Dorsolateral prefrontal cortex (tissue), 120 donors: ENCODE measurements at regions of chr5 and their contacts with region 1.

Region 1: DNA sequence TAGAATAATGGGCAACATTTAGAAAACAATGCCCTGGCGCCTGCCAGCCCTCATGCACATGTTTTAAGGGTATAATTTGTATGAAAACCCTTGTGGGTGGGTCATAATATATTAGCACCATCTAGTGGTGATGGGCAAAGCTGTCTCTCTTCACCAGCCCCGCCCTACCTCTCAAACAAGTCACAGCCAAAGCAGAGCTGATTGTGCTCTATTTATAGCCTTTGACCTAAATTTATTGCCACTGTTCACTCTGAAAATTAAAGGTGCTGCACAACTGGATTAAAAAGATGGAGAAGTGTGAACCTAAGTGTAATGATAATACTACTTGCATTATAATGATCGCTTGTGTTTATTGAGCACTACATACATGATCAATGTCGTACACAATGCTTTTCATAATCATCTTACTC is 131.9 kb upstream of the ANKH start:
- DNase-seq: peak; percentile 35 to 80 (median 62)
- H3K4me3 ChIP-seq: no peak overlapping the region
- H3K27ac ChIP-seq: no peak overlapping the region
- H3K27me3 ChIP-seq: no peaks in the 10 kb centered on the region
- CTCF ChIP-seq: peak; percentile 65 to 98 (median 93)

Region 2: GRCh38 chr5:14399054-14399692 is 604.3 kb before region 1 on chr5:
- intact Hi-C with region 1: loop called in 1 of 2 experiments (anchors 5 kb)
- DNase-seq: peak in 1 of 10 donors; percentile 34
- H3K4me3 ChIP-seq: no peak overlapping the region
- H3K27ac ChIP-seq: peak overlapping the region in 3 of 59 donors; percentile 1 to 38 (median 9)
- H3K27me3 ChIP-seq: no peaks in the 10 kb centered on the region
- CTCF ChIP-seq: peak; percentile 51 to 85 (median 74)

Region 3: DNA sequence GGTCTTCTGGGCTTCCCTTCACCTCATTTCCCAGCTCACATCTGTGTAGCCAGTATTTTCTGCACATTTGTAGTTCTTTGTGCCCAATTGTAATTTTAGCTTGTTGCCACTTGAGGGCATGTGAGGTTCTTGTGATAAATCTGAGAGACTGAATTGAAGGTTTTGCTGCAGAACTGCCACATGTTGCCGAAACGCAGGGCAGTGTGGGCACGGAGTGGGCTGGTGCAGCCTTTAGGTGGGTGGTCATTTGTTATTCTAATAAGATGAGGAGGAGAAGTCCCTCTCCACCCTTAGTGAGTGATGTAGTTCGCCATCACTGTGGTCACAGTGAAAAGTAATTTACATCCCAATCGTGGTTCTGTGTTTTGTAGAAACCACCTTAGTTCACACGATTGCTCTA is 317.8 kb before region 1 on chr5:
- intact Hi-C with region 1: loop called (anchors 2 to 5 kb)
- DNase-seq: peak in 2 of 10 donors; percentile 42 to 50
- H3K4me3 ChIP-seq: peak overlapping the region in 13 of 59 donors; percentile 3 to 41 (median 22)
- H3K27ac ChIP-seq: peak overlapping the region in 3 of 59 donors; percentile 7 to 31 (median 12)
- H3K27me3 ChIP-seq: no peaks in the 10 kb centered on the region
- CTCF ChIP-seq: peak; percentile 47 to 89 (median 76)

Region 4: GRCh38 chr5:14871210-14872069 is 132.1 kb before region 1 on chr5 and contains the start of gene ANKH:
- intact Hi-C with region 1: loop called (anchors 5 kb)
- DNase-seq: peak; percentile 42 to 85 (median 64)
- H3K4me3 ChIP-seq: peak within 1 kb of the TSS; percentile 63 to 97 (median 87)
- H3K27ac ChIP-seq: peak within 1 kb of the TSS; percentile 55 to 97 (median 92)
- H3K27me3 ChIP-seq: no peaks in the 10 kb centered on the region
- CTCF ChIP-seq: peak in 1 of 56 donors; percentile 4
- total RNA-seq, gene ANKH: 182 to 332 (median 241) TPM